Right cardiac atrium (tissue), 5 donors: ENCODE measurements at regions of chr14 and their contacts with region 1.

Region 1: DNA sequence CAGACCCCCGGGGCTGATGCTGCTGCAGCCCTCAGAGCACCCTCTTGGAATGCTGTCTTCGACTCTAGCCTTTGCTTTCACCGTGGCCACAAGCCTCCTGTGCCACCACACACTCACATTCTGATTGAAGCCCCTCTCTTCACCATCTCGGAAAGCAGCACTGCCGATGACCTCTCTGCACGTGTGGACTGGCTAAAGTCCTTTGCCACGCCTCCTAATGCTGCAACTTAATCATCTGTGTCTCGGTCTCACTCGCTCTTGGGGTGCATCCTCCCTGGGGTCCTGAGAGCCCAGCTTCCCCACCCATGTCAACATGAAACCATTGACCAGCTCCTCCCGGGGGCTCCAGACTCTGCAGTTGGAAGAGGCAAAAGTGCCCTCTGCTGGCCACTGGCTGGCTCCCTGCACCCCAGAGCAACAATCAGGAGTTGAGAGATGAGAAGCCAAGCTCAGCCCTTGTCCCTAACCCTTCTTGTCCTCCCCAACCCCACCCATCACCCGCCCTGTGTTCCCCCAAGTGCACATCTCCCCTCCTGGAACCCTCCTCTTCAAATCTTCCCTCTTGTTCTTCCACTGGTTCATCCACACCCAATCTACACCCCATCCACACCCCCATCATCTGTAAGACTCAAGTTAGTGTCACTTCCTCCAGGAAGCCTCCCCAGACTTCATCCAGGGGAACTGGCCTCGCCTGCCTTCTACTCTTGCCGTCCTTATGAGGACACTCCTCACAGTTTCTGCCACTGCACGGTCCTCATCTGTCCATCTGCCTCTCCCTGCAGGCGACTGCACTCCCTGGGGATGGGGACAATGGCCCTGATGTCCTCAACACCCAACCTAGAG is 23.6 kb upstream of the FAM181A start:
- DNase-seq: peak in 1 of 3 donors; percentile 58
- ATAC-seq: no peak
- H3K4me3 ChIP-seq: no peak overlapping the region
- H3K27ac ChIP-seq: no peak overlapping the region
- H3K4me1 ChIP-seq: no peaks in the 10 kb centered on the region
- H3K27me3 ChIP-seq: no peaks in the 10 kb centered on the region

Region 2: GRCh38 chr14:93648440-93649168 is 255.0 kb before region 1 on chr14:
- intact Hi-C with region 1: loop called in 1 of 4 experiments (anchors 5 kb)
- DNase-seq: no peak
- ATAC-seq: no peak
- H3K4me3 ChIP-seq: no peak overlapping the region
- H3K27ac ChIP-seq: no peak overlapping the region
- H3K4me1 ChIP-seq: no peaks in the 10 kb centered on the region
- H3K27me3 ChIP-seq: no peaks in the 10 kb centered on the region

Region 3: DNA sequence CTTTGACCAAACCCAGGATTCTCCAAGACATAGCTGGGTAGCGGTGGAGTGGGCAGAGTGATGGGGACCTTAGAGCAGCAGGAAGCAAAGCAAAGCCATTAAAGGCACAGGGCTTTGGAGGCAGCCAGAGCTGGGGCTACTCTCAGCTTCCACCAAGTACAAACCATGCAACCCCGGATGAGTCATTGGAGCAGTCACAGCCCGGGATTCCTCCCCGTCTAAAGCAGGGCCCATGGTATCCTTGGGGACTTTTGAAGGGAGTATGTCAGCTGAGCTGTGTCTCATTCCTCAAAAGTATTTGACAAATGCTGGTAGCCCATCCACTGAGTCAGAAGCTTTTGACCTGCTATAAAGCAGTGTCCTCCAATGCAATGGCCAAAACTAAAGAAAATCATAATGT is 197.3 kb after region 1 on chr14:
- intact Hi-C with region 1: no loop called
- DNase-seq: no peak
- ATAC-seq: peak in 1 of 2 donors; percentile 39
- H3K4me3 ChIP-seq: no peak overlapping the region
- H3K27ac ChIP-seq: no peak overlapping the region
- H3K4me1 ChIP-seq: no peaks in the 10 kb centered on the region
- H3K27me3 ChIP-seq: no peaks in the 10 kb centered on the region